ENCODE measurements at regions of chr11 and their contacts with region 1.

Region 1: DNA sequence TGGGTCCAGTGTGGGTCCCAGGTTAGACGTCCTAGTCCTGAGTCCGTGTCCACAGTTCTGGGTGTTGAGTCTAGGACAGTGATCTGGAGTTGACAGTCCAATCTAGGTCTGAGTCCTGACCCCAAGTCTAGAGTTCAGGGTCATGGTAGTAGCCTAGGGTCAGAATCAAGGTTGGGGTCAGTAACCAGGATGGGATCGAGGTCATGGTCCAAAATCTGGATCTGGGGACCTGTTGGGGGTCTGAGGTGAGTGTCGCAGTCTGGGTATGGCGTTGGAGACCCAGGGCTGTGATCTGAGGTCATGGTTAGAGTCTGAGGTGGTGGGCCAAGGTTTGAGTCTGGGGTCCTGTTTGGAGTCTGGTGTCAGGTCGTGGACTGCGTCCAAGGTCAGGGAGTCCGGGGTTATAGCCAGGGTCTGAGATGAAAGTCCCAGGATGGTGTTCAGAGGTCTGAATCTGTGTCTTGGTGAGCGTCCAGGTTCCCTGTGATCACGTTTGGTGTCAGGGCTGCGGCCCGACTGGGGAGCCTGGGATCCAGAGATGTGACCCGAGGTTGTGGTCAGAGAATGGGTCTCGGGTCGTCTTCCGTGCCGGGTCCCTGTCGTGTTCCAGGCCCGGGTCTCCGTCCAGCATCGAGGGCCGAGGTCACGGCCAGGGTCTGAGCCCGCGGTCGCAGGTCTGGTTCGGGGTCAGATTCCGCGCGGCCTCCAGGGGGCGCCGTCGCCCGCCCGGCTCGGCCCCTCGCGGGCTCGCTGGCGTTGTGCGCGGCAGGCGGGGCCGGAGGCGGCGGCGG is 445 bp upstream of the GRK2 start:
- DNase-seq: peak; percentile 76
- ATAC-seq: peak; percentile 28
- H3K4me3 Mint-ChIP-seq: peak overlapping the region; percentile 66
- H3K27ac Mint-ChIP-seq: peak overlapping the region; percentile 61
- H3K4me1 Mint-ChIP-seq: peaks cover 62% of the 10 kb centered on the region
- H3K27me3 Mint-ChIP-seq: no peaks in the 10 kb centered on the region
- CTCF ChIP-seq: peak; percentile 61

Region 2: GRCh38 chr11:66958232-66958955 is 307.4 kb before region 1 on chr11 and contains the start of gene PC:
- CTCF ChIA-PET with region 1: no interaction called
- POLR2A ChIA-PET with region 1: no interaction called
- intact Hi-C with region 1: no loop called
- DNase-seq: peak; percentile 99
- ATAC-seq: peak; percentile 98
- H3K4me3 Mint-ChIP-seq: peak within 1 kb of the TSS; percentile 69
- H3K27ac Mint-ChIP-seq: peak within 1 kb of the TSS; percentile 78
- H3K4me1 Mint-ChIP-seq: peaks cover 20% of the 10 kb centered on the region
- H3K27me3 Mint-ChIP-seq: peaks cover 1% of the 10 kb centered on the region
- CTCF ChIP-seq: no peak
- total RNA-seq, gene PC: 5.6 to 6.5 TPM

Region 3: DNA sequence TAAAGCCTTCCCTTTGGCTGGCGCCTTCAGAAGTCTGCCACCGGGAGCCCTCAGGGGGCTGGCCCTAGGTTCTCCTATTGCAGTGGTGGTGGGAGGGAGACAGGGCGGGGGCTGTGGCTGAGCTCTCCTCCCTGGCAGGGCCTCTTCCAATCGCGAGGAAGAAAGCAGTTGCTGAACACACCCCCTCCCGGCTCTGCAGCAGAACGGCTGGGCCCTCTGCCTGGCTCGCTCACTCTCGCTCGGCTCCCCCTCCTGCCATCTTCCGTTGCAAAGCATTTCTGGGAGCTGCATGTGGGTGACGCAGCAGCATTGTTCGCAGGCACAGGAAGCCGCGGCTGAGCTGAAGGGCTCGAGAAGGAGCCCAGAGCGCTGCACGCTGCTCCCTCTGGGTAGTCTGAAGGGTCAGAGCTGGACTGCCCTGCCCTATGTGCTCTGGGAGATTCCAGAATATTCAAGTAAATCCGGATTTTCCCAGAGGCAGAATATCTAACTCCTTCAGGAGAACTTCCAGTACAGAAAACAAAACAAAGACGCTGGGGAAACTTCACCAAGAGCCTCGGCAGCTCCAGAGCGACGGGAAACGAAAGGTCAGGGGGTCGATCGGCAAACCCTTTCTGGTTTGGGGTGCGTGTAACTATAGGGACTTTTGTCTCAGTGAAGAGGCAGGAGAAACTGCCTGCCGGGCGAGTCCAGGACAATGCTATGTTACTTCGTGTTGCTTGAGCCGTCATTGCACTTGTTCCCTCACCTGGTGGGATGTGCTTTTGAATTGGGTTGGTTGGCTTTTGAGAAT is 25.8 kb before region 1 on chr11:
- CTCF ChIA-PET with region 1: interaction called, 19 read pairs
- POLR2A ChIA-PET with region 1: interaction called, 38 read pairs
- intact Hi-C with region 1: no loop called
- DNase-seq: peak; percentile 98
- ATAC-seq: peak; percentile 94
- H3K4me3 Mint-ChIP-seq: peak overlapping the region; percentile 96
- H3K27ac Mint-ChIP-seq: peak overlapping the region; percentile 100
- H3K4me1 Mint-ChIP-seq: peaks cover 43% of the 10 kb centered on the region
- H3K27me3 Mint-ChIP-seq: no peaks in the 10 kb centered on the region
- CTCF ChIP-seq: no peak

Region 4: DNA sequence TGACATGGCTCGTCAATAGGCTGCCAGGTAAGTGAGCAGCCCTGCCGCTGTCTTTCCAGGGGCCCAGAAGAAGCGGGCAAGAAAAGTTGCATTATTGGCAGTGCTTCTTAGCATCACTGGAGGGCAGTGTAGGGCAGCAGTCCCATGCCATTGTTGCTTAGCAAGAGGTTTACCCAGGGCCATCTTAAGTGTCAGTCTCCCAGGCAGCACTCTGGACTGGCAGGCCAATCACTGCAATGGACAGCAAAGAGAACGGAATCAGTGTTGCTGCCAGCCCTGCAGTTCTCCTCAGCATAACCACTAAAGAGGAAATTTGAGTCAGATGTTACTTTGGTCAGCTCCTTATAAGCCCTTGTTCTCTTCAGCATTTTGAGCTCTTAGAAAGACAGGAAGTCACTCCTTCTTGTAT is 13.0 kb before region 1 on chr11:
- CTCF ChIA-PET with region 1: interaction called, 60 read pairs
- POLR2A ChIA-PET with region 1: interaction called, 32 read pairs
- intact Hi-C with region 1: no loop called
- DNase-seq: peak; percentile 56
- ATAC-seq: peak; percentile 86
- H3K4me3 Mint-ChIP-seq: no peak overlapping the region
- H3K27ac Mint-ChIP-seq: peak overlapping the region; percentile 58
- H3K4me1 Mint-ChIP-seq: peaks cover 39% of the 10 kb centered on the region
- H3K27me3 Mint-ChIP-seq: no peaks in the 10 kb centered on the region
- CTCF ChIP-seq: peak; percentile 35

Region 5: DNA sequence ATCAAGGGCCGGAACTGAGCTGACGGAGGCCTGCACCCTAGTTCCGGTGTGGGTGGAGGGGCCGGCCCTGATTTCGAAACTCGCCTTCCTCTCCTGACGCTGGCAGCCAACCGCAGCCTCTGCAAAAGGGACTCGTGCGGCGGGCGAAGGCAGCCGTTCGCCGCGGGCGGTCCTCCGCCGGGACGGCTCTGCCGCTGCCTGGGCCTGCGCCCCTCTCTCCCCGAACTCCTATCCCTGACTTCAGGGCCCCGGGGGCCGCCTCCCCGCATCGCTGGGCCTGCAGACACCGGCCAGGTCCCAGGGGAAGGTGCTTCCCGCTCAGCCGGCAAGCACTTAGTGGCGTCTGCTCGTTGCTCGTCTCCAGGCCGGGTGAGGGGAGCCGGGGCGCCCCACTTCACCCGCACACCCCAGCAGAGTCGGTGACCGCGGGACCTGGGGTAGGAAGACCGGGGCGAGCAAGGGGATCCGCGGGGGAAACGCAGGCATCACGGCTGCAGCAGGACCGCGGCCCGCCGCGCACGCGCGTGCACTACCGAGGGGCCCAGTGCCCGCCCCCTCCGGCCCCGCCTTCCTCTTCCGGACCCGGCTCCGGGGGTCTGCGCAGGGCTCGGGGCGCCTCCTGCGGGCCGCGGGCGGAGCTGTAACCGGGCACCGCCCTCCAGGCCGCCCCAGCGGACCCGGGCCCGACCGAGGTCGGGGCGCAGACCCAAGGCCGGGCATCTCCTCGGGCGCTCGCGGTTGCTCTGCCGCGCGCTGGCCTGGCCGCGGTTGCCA is 22.8 kb after region 1 on chr11:
- CTCF ChIA-PET with region 1: interaction called, 55 read pairs
- POLR2A ChIA-PET with region 1: interaction called, 308 read pairs
- intact Hi-C with region 1: loop called (anchors 2 kb)
- DNase-seq: peak; percentile 95
- ATAC-seq: peak; percentile 77
- H3K4me3 Mint-ChIP-seq: peak overlapping the region; percentile 72
- H3K27ac Mint-ChIP-seq: peak overlapping the region; percentile 99
- H3K4me1 Mint-ChIP-seq: peaks cover 58% of the 10 kb centered on the region
- H3K27me3 Mint-ChIP-seq: no peaks in the 10 kb centered on the region
- CTCF ChIP-seq: peak; percentile 41

Region 6: GRCh38 chr11:67345920-67346799 is 80.3 kb after region 1 on chr11:
- CTCF ChIA-PET with region 1: interaction called, 53 read pairs
- POLR2A ChIA-PET with region 1: interaction called, 4 read pairs
- intact Hi-C with region 1: no loop called
- DNase-seq: peak; percentile 41
- ATAC-seq: peak; percentile 80
- H3K4me3 Mint-ChIP-seq: no peak overlapping the region
- H3K27ac Mint-ChIP-seq: peak overlapping the region; percentile 89
- H3K4me1 Mint-ChIP-seq: peaks cover 44% of the 10 kb centered on the region
- H3K27me3 Mint-ChIP-seq: no peaks in the 10 kb centered on the region
- CTCF ChIP-seq: peak; percentile 87

Region 7: GRCh38 chr11:67382276-67383136 is 116.7 kb after region 1 on chr11:
- CTCF ChIA-PET with region 1: interaction called, 15 read pairs
- POLR2A ChIA-PET with region 1: interaction called, 4 read pairs
- intact Hi-C with region 1: no loop called
- DNase-seq: peak; percentile 90
- ATAC-seq: peak; percentile 95
- H3K4me3 Mint-ChIP-seq: no peak overlapping the region
- H3K27ac Mint-ChIP-seq: no peak overlapping the region
- H3K4me1 Mint-ChIP-seq: peaks cover 2% of the 10 kb centered on the region
- H3K27me3 Mint-ChIP-seq: no peaks in the 10 kb centered on the region
- CTCF ChIP-seq: peak; percentile 94

Measured in activated CD8-positive, alpha-beta T cell treated with anti-CD3 and anti-CD28 coated beads for 36 hours (primary cell).